Spleen (tissue), 13 donors: ENCODE measurements at regions of chr5 and their contacts with region 1.

Region 1: DNA sequence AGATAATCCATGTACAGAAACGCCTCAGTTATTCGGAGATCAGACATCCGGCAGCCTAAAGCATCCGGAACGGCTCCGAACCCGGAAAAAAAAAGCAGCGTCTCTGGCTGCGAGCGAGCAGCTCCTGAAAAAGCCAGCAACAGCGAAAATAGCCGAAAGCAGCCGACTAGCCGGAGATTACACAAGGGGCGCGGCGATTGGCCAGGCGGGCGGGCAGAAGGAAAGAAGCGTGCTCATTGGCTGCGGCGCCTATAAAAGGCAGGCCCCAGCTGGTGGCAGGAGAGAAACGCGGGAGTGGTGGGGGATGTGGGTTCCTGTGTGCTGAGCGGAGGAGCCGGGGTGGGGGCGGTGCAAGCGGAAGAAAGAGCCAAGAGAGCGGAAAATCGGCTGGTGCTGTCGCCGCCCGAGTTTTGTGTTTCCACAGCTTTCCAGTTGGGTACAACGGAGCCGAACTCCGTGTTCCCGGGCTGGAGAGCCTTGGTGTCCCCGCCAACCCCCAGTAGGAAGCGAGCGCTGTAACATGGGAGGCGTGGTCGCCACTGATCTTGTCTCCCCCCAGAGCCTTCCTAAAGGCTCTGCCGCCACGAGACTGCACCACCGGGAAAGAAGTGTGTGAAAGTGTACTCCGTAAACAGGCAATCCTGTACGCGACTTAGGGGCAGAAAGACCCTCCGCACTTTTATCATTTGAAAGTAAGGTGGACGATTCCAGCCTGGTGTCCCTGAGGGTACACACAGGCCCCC is at the start of gene ARL15:
- DNase-seq: peak; percentile 99
- H3K4me3 ChIP-seq: peak within 1 kb of the TSS; percentile 71 to 93 (median 90)
- H3K27ac ChIP-seq: peak within 1 kb of the TSS; percentile 82 to 94 (median 91)
- H3K4me1 ChIP-seq: peaks cover 0 to 55% (median 29%) of the 10 kb centered on the region in 6 donors
- H3K27me3 ChIP-seq: no peaks in the 10 kb centered on the region
- CTCF ChIP-seq: peak in 8 of 11 experiments; percentile 11 to 40 (median 17)
- POLR2A ChIP-seq: peak; percentile 90 to 100 (median 99)
- total RNA-seq, gene ARL15: 25.9 to 70.2 (median 38.3) TPM

Region 2: DNA sequence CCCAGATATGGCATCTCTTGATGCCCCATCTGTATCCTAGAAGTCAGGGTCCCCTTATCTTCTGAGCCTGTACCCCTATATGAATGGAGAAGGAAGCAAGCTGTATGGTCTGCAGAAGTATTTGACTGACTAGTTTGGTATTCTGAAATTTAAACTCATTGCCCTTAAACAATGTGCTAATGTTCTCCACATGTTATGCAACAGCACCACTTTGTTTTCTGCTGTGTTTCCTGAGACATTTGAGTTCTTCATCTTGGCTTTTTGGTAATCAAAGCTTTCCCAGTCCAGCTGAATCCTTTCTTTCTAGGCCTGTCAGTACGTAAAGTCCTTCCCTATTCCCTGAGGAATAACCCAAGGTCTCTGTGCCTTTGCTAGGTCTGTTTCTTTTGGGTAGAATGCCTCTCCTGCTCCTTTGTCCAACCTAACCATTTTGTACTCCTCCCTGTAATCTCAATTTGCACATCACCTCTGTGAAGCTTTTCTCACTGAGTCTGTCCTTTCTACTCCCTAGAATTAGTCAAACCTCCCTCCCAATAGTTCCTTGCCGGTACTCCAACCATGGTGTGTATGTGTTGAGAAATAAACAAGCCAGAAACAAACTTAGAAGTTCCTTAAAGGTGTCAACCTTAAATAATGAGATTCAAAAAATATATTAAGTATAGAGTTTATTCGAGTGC is 72.8 kb after region 1 on chr5:
- intact Hi-C with region 1: no loop called
- DNase-seq: no peak
- H3K4me3 ChIP-seq: no peak overlapping the region
- H3K27ac ChIP-seq: no peak overlapping the region
- H3K4me1 ChIP-seq: no peaks in the 10 kb centered on the region
- H3K27me3 ChIP-seq: peaks cover 0 to 5% (median 0%) of the 10 kb centered on the region in 7 donors
- CTCF ChIP-seq: no peak
- POLR2A ChIP-seq: no peak

Region 3: DNA sequence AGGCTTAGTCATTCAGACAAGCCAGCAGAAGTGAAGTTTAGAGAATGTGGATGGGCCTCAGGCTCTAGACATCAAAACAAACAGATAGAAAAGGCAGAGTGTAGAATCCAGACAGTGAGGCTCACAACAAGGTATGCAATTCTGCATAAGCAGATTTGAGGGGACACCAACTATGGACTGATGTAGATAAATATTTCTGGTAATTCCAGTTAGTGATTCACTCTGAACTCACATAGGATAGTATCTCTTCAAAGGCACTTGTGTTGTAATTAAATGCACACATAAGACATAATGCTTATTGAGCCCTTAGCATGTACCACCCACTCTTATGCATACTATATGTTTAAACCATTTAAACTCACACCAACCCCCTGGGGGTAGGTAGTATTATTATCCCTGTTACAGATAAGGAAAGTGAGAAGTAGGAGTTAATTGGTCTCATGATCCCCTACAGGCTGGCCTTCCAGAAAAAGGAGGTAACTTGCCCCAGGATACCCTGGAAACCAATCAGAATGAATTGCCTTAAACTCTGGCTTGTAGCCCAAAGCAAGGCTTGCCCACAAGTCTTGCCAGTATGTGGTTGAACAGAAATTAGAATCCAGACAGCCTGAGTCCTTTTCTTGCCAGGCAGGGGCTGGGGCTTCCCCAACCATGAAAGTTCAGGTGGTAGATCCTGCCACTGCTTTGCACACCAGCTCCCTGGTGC is 105.4 kb after region 1 on chr5:
- intact Hi-C with region 1: loop called (anchors 10 kb)
- DNase-seq: no peak
- H3K4me3 ChIP-seq: no peak overlapping the region
- H3K27ac ChIP-seq: no peak overlapping the region
- H3K4me1 ChIP-seq: no peaks in the 10 kb centered on the region
- H3K27me3 ChIP-seq: no peaks in the 10 kb centered on the region
- CTCF ChIP-seq: no peak
- POLR2A ChIP-seq: no peak

Region 4: DNA sequence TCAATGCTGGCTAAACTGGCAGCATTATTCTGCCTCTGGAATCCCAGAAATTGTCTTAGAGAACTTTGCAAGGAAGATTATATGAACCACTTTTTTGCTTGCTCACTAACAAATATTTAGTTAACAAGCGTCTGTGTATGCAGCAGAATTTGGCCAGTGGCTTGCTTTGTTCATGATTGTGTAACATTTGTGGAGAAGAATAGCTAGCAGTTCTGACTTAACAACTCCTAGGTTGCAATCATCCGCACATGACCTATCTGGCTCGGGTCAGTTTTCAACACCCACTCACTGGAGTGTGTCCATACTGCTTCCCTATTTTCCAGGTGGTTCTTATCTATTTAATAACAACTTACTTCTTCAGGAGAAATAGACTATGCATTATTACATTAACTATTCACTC is 305.4 kb after region 1 on chr5:
- intact Hi-C with region 1: no loop called
- DNase-seq: no peak
- H3K4me3 ChIP-seq: no peak overlapping the region
- H3K27ac ChIP-seq: peak overlapping the region in 6 of 8 donors; percentile 30 to 72 (median 63)
- H3K4me1 ChIP-seq: peaks cover 3 to 60% (median 27%) of the 10 kb centered on the region in 6 donors
- H3K27me3 ChIP-seq: no peaks in the 10 kb centered on the region
- CTCF ChIP-seq: no peak
- POLR2A ChIP-seq: no peak

Region 5: DNA sequence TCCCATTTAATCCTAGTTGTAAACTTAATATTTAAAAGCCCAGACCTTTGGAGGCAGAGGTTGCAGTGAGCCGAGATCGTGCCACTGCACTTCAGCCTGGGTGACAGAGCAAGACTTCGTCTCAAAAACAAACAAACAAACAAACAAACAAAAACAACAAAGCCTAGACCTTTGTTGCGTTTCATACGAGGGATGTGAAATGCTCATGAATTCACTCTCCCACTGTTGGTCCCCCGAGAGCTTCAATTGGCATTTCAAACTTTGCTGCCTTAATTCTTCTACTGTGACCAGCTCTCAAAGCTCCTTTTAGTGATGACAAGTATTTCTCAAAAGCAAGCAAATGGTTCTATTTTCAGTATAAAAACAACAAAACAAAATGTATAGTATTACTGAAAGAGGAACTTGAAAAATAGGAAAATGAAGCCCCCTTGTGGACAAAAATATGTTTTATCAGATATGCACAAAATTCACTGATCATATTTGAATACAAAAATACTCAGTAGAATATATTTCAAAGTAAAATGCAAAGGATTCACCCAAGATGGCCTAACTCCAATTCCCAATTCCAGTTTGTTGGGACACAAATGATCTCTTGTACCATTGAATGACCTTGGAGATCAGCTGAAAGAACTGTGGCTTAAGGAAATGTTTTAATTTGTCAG is 534.4 kb after region 1 on chr5:
- intact Hi-C with region 1: no loop called
- DNase-seq: no peak
- H3K4me3 ChIP-seq: peak overlapping the region in 2 of 8 donors; percentile 22 to 35
- H3K27ac ChIP-seq: peak overlapping the region in 5 of 8 donors; percentile 57 to 68 (median 64)
- H3K4me1 ChIP-seq: peaks cover 0 to 17% (median 6%) of the 10 kb centered on the region in 6 donors
- H3K27me3 ChIP-seq: peaks cover 0 to 3% (median 0%) of the 10 kb centered on the region in 7 donors
- CTCF ChIP-seq: peak; percentile 49 to 79 (median 70)
- POLR2A ChIP-seq: no peak